ENCODE measurements at regions of chr5 and their contacts with region 1.

Region 1: GRCh38 chr5:91383027-91383955 is at the start of gene ARRDC3:
- DNase-seq: peak; percentile 90 to 99 (median 96)
- ATAC-seq: peak; percentile 39 to 40 (median 40)
- H3K4me3 ChIP-seq: peak within 1 kb of the TSS; percentile 96 to 97
- H3K4me3 Mint-ChIP-seq: peak within 1 kb of the TSS; percentile 91 to 96 (median 92)
- H3K27ac ChIP-seq: peak within 1 kb of the TSS; percentile 99
- H3K27ac Mint-ChIP-seq: peak within 1 kb of the TSS; percentile 99
- H3K4me1 ChIP-seq: peaks cover 11 to 17% of the 10 kb centered on the region in 2 experiments
- H3K4me1 Mint-ChIP-seq: peaks cover 22 to 27% (median 25%) of the 10 kb centered on the region in 3 donors
- H3K27me3 ChIP-seq: no peaks in the 10 kb centered on the region
- H3K27me3 Mint-ChIP-seq: no peaks in the 10 kb centered on the region
- total RNA-seq, gene ARRDC3: 107 to 219 (median 127) TPM

Region 2: DNA sequence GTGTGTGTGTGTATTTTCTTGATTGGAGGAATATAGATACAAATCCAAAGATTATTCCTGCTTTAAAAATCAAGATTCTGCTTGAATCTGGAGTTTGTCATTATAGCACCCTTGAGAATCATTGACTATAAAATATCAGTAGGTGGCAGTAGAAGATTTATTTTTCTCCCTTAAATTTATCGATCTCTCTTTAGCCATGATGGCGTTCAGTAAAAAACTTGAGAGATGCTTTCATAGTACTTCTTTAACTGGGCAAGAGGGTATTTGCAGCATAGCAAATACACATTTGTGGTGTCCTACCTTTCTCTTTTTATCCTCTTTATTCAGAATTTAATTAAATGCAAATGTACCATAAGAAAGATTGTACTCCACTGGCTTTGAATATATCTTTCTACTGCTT is 517.0 kb before region 1 on chr5:
- CTCF ChIA-PET with region 1: interaction called, 5 to 24 read pairs
- POLR2A ChIA-PET with region 1: interaction called in 1 of 2 experiments, 3 read pairs
- DNase-seq: peak in 1 of 35 experiments; percentile 50
- ATAC-seq: peak in 3 of 4 experiments; percentile 42 to 51 (median 43)
- H3K4me3 ChIP-seq: no peak overlapping the region
- H3K4me3 Mint-ChIP-seq: no peak overlapping the region
- H3K27ac ChIP-seq: no peak overlapping the region
- H3K27ac Mint-ChIP-seq: no peak overlapping the region
- H3K4me1 ChIP-seq: no peaks in the 10 kb centered on the region
- H3K4me1 Mint-ChIP-seq: peaks cover 9 to 11% (median 9%) of the 10 kb centered on the region in 3 donors
- H3K27me3 ChIP-seq: no peaks in the 10 kb centered on the region
- H3K27me3 Mint-ChIP-seq: peaks cover 0 to 9% of the 10 kb centered on the region in 2 donors

Region 3: DNA sequence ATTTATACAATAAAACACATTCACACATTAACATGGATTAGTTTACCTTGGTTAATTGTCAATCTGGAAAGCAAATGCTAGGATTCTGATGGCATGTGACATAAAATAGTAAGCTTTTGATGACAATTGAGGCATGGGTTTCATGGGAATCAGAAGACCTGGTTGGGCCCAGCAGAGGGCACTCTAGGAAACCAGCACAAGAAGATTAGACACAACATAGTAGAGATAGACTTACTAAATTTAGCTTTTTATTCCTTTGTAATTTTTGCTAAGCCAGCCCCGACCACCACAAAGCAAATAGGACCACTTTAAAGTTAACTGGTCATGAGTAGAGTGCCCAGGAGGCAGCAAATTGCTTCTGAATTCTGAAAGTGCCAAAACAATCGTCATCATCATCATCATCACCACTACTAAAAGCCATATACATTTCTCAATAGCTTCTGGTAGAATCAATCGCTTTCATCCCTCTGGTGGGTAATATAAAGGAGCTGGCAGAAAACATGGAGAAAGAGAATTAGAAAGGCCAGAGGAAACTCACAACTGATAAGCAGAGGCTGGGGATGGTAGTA is 163.4 kb before region 1 on chr5:
- CTCF ChIA-PET with region 1: interaction called, 37 to 126 read pairs
- POLR2A ChIA-PET with region 1: interaction called in 1 of 2 experiments, 4 read pairs
- DNase-seq: peak in 22 of 35 experiments; percentile 2 to 53 (median 16)
- ATAC-seq: no peak
- H3K4me3 ChIP-seq: no peak overlapping the region
- H3K4me3 Mint-ChIP-seq: no peak overlapping the region
- H3K27ac ChIP-seq: no peak overlapping the region
- H3K27ac Mint-ChIP-seq: no peak overlapping the region
- H3K4me1 ChIP-seq: no peaks in the 10 kb centered on the region
- H3K4me1 Mint-ChIP-seq: no peaks in the 10 kb centered on the region
- H3K27me3 ChIP-seq: peaks cover 0 to 7% of the 10 kb centered on the region in 2 experiments
- H3K27me3 Mint-ChIP-seq: no peaks in the 10 kb centered on the region

Region 4: GRCh38 chr5:91232523-91232922 is 150.8 kb before region 1 on chr5:
- CTCF ChIA-PET with region 1: interaction called, 45 to 93 read pairs
- POLR2A ChIA-PET with region 1: interaction called in 1 of 2 experiments, 7 read pairs
- DNase-seq: no peak
- ATAC-seq: no peak
- H3K4me3 ChIP-seq: no peak overlapping the region
- H3K4me3 Mint-ChIP-seq: no peak overlapping the region
- H3K27ac ChIP-seq: no peak overlapping the region
- H3K27ac Mint-ChIP-seq: no peak overlapping the region
- H3K4me1 ChIP-seq: no peaks in the 10 kb centered on the region
- H3K4me1 Mint-ChIP-seq: no peaks in the 10 kb centered on the region
- H3K27me3 ChIP-seq: no peaks in the 10 kb centered on the region
- H3K27me3 Mint-ChIP-seq: peaks cover 3 to 4% of the 10 kb centered on the region in 2 donors

Region 5: GRCh38 chr5:91280362-91281269 is 102.7 kb before region 1 on chr5:
- CTCF ChIA-PET with region 1: interaction called, 5 to 14 read pairs
- POLR2A ChIA-PET with region 1: interaction called, 5 to 11 read pairs
- DNase-seq: peak; percentile 54 to 93 (median 73)
- ATAC-seq: peak; percentile 87 to 94 (median 91)
- H3K4me3 ChIP-seq: peak overlapping the region; percentile 60 to 91
- H3K4me3 Mint-ChIP-seq: peak overlapping the region; percentile 74 to 89 (median 88)
- H3K27ac ChIP-seq: peak overlapping the region; percentile 53
- H3K27ac Mint-ChIP-seq: peak overlapping the region; percentile 75 to 89
- H3K4me1 ChIP-seq: peaks cover 4 to 19% of the 10 kb centered on the region in 2 experiments
- H3K4me1 Mint-ChIP-seq: peaks cover 26 to 32% (median 31%) of the 10 kb centered on the region in 3 donors
- H3K27me3 ChIP-seq: no peaks in the 10 kb centered on the region
- H3K27me3 Mint-ChIP-seq: no peaks in the 10 kb centered on the region

Region 6: DNA sequence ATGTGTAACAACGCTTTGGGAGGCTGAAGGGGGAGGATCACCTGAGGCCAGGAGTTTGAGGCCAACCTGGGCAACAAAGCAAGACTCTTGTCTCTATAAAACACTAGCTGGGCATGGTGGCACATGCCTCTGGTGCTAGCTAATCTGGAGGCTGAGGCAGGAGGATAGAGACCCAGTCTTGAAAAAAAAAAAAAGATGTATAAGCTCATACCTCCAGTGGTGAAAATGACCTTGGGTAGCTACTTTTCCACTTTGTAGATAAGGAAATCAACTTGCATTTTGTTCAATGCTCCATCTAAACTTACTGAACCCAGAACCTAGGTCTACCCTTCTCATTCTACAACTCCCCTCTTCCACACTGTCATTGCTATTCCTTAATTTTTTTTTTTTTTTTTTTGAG is 16.7 kb before region 1 on chr5:
- CTCF ChIA-PET with region 1: interaction called, 6 to 36 read pairs
- POLR2A ChIA-PET with region 1: interaction called, 5 to 14 read pairs
- DNase-seq: no peak
- ATAC-seq: no peak
- H3K4me3 ChIP-seq: no peak overlapping the region
- H3K4me3 Mint-ChIP-seq: no peak overlapping the region
- H3K27ac ChIP-seq: no peak overlapping the region
- H3K27ac Mint-ChIP-seq: no peak overlapping the region
- H3K4me1 ChIP-seq: no peaks in the 10 kb centered on the region
- H3K4me1 Mint-ChIP-seq: peaks cover 16 to 27% (median 27%) of the 10 kb centered on the region in 3 donors
- H3K27me3 ChIP-seq: peaks cover 0 to 2% of the 10 kb centered on the region in 2 experiments
- H3K27me3 Mint-ChIP-seq: no peaks in the 10 kb centered on the region

Measured in T-cell (primary cell).